ENCODE measurements at regions of chr5 and their contacts with region 1.

Region 1: GRCh38 chr5:152221721-152222629 is 183.1 kb downstream of the NMUR2 start:
- DNase-seq: no peak
- ATAC-seq: peak; percentile 82

Region 2: DNA sequence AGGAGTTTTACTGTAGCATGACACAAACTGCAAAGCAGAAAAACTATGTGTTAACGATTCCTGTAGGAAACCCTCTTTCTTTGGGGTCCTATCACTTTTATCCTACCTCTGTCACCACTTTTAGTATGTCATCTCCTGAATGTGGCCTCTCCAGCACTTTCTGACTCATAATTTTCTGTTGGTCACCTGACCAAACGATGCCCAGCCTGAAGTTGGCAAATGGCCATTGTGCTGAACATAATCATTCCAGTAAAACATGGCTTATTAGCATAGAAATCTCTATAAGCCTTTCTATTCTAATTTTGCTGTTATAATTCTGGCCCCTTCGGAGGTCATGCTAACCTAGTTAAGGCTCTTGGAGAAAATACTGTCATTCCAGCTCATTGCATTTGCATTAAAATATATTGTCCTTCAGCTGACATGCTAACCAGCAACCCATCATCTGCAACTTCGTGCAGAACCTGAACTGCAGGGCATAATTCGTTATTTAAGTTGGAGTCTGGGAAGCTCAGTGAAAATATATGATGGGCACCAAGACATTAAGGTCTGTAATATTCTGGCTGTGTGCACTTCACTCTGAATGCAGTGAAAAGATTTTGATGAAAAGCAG is 42.8 kb after region 1 on chr5:
- intact Hi-C with region 1: loop called (anchors 2 kb)
- DNase-seq: no peak
- ATAC-seq: no peak

Measured in Right ventricle myocardium inferior (tissue), 1 donor.